Activated T-helper 1 cell treated with anti-CD3 and anti-CD28 coated beads, Interleukin-12 subunit alpha, Interleukin-12 subunit beta, Interleukin-2, Interleukin-4 antibody, amounts not matched to agents 30 ng/mL and 10 ng/mL and 1 ng/mL, durations not matched to agents 14 hours and 24 hours and 36 hours (primary cell): ENCODE measurements at regions of chr9 and their contacts with region 1.

Region 1: GRCh38 chr9:133375724-133376654 is at the starts of genes STKLD1 and SURF4:
- DNase-seq: peak; percentile 96
- H3K4me3 Mint-ChIP-seq: peak within 1 kb of the TSS; percentile 99
- H3K27ac Mint-ChIP-seq: peak within 1 kb of the TSS; percentile 99
- H3K4me1 Mint-ChIP-seq: peaks cover 28% of the 10 kb centered on the region
- H3K27me3 Mint-ChIP-seq: no peaks in the 10 kb centered on the region
- total RNA-seq, gene STKLD1: 0.64 and 1.5 TPM in 2 replicates
- total RNA-seq, gene SURF4: 236 and 242 TPM in 2 replicates

Region 2: DNA sequence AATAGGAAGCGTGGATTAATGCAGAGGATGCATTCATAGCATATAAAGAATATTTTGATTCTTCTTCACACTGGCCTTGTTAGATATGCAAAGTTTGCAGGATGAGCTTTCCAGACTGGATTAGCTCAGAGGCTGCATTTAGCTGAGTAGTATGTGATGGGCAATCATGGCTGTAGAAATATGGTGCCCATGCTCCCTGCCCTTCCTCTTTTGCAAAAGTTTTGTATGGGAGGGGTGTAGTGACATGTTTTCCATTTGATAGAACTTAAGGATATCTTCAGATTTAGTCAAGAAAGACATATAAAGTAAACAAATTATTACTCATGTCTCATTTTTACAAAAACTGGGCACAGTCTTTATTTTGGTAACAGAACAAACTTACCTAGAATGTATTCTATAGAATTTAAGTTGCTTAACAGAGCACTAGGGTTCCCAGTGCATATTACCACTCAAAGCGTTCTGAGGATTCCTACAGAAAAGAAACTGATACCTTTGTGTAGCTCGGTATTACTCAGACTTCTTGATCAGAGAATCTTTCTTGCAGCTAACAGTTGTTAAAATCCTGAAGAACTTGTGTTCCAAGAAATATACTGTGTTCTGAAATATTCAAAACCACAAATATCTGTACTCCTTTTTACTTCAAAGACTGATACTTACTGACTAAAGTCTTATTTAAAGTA is 695.9 kb before region 1 on chr9:
- intact Hi-C with region 1: no loop called
- DNase-seq: no peak
- H3K4me3 Mint-ChIP-seq: no peak overlapping the region
- H3K27ac Mint-ChIP-seq: peak overlapping the region; percentile 90
- H3K4me1 Mint-ChIP-seq: peaks cover 51% of the 10 kb centered on the region
- H3K27me3 Mint-ChIP-seq: no peaks in the 10 kb centered on the region

Region 3: DNA sequence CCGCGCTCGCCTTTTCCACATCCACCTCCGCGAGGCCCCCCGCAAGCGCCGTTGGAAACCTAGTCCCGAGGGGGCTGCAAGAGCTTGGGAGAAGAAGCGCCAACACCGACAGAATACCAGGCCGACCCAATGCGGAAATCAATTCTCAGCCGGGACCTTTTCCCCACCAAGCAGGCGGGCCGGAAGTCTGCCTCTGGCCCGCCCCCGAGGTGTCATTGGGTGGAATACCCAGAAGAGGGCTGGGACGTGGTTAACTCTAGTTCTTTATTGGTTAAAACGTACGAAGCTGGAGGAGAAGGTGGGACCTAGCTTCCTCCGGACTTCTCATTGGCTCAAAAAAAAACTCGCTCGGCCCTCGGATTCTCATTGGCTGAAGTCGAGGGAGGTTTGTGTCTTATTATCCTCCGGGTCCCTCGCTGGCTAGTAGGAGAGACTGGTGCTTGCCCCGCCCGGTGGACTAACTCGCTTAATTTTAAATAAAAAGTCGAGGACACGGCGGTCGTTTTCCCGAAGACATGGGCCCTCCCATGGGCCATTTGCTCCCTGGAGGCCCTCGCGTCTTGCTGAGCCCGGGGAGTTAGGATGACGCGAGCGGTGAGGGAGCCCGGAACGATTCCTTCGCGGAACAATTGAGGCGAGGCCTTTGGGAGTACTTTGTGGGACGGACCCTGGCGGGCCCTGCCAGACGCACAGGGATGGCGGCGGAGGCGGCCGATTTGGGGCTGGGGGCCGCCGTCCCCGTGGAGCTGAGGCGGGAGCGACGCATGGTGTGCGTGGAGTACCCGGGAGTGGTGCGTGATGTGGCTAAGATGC is 345.5 kb before region 1 on chr9 and contains the start of gene GTF3C5:
- intact Hi-C with region 1: loop called (anchors 1 kb)
- DNase-seq: peak; percentile 91
- H3K4me3 Mint-ChIP-seq: peak within 1 kb of the TSS; percentile 96
- H3K27ac Mint-ChIP-seq: peak within 1 kb of the TSS; percentile 97
- H3K4me1 Mint-ChIP-seq: peaks cover 47% of the 10 kb centered on the region
- H3K27me3 Mint-ChIP-seq: no peaks in the 10 kb centered on the region
- total RNA-seq, gene GTF3C5: 87.8 and 89.0 TPM in 2 replicates

Region 4: DNA sequence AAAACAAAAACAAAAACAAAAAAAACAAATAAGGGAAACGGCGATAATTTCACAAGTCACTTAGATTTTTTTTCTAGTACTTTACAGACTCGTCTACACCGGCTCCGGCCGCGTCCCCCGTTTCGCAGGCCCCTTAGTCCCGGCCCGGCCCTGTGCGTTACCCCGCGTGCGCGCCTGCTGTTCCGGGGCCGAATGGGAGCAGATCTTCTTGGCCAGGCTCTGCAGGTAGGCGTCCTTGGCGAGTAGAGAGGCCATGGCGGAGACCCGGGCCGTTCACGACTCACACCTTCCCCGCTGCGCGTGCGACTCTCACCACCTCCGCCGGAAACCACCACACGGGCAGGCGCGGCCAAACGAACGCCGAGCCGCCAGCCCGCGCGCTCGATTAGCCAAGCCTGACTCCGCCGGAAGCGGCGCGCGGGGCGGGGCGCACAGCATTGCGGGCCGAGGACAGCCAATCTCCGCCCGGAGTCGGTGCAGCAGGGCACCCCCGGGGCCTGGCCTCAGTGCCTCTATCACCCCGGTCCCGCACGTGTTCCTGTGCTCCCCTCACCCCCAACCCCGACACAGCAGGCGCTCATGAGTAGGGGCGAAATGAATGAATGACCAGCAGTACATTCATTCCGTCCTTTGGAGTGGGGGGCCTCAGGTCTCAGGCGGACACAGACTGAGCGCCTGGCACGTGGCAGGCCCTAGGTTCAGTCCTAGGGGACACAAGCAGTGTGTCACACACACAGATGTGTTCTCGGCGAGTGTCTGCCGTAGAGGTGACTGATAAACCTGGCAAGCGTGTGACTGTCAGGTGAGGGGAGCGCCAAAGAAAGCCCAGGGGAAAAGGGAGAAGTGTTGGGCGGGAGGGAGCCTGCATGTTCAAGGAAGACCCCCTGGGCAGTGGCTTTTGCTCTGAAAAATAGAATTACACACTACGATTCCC is 39.8 kb before region 1 on chr9 and contains the start of gene SURF6:
- intact Hi-C with region 1: loop called (anchors 1 kb)
- DNase-seq: peak; percentile 94
- H3K4me3 Mint-ChIP-seq: peak within 1 kb of the TSS; percentile 96
- H3K27ac Mint-ChIP-seq: peak within 1 kb of the TSS; percentile 88
- H3K4me1 Mint-ChIP-seq: peaks cover 16% of the 10 kb centered on the region
- H3K27me3 Mint-ChIP-seq: no peaks in the 10 kb centered on the region
- total RNA-seq, gene SURF6: 29.0 and 29.8 TPM in 2 replicates

Region 5: GRCh38 chr9:133356391-133357091 is 19.4 kb before region 1 on chr9 and contains the starts of genes SURF1 and SURF2:
- intact Hi-C with region 1: loop called (anchors 1 kb)
- DNase-seq: peak; percentile 88
- H3K4me3 Mint-ChIP-seq: peak within 1 kb of the TSS; percentile 90
- H3K27ac Mint-ChIP-seq: peak within 1 kb of the TSS; percentile 79
- H3K4me1 Mint-ChIP-seq: peaks cover 37% of the 10 kb centered on the region
- H3K27me3 Mint-ChIP-seq: no peaks in the 10 kb centered on the region
- total RNA-seq, gene SURF1: 36.3 and 37.7 TPM in 2 replicates
- total RNA-seq, gene SURF2: 28.6 and 30.9 TPM in 2 replicates

Region 6: DNA sequence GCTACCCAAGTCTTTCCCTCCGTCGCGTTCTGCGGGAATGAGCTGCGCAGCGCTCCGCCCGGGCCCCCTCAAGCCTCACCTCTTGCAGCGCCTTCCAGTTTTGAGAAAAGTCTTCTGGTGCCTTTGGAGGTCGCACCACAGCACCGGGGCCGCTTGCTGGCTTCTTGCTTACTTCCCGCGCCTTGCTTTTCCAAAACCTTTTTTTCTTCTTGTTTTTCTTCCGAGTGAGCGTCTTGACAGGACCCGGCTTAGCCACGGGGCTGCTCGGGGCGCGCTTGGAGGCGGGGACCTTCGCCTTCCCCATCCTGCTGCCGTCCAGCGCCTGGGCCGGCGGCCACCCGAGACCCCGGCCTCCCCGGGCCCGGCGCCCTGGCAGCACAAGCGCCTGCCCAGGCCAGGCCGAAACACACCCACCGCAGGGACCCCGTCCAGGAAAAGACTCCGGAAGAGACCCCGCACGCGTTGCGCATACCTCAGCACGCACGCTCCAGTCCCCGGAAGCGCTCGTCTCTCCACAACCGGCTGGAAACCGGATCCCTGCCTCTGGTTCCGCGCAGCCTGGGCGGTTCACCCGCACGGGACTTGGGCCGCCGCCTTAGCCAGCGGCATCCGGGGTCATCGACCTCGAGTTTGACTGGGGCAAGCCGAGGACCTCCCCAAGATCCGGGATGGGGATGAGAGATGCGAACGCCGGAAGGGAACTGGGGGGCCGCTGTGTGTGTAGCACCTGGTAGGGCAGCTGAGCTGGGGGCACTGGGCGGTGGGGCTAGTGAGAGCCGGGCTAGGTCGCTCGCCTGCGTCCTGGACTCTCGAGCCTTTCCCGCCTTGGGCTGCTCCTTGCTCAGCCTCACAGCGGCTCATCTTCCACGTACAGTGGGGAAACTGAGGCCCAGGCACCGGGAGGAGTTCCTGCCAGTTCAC is 41.8 kb after region 1 on chr9 and contains the start of gene REXO4:
- intact Hi-C with region 1: loop called (anchors 1 kb)
- DNase-seq: peak; percentile 86
- H3K4me3 Mint-ChIP-seq: peak within 1 kb of the TSS; percentile 93
- H3K27ac Mint-ChIP-seq: peak within 1 kb of the TSS; percentile 86
- H3K4me1 Mint-ChIP-seq: peaks cover 56% of the 10 kb centered on the region
- H3K27me3 Mint-ChIP-seq: no peaks in the 10 kb centered on the region
- total RNA-seq, gene REXO4: 42.5 and 43.8 TPM in 2 replicates

Region 7: DNA sequence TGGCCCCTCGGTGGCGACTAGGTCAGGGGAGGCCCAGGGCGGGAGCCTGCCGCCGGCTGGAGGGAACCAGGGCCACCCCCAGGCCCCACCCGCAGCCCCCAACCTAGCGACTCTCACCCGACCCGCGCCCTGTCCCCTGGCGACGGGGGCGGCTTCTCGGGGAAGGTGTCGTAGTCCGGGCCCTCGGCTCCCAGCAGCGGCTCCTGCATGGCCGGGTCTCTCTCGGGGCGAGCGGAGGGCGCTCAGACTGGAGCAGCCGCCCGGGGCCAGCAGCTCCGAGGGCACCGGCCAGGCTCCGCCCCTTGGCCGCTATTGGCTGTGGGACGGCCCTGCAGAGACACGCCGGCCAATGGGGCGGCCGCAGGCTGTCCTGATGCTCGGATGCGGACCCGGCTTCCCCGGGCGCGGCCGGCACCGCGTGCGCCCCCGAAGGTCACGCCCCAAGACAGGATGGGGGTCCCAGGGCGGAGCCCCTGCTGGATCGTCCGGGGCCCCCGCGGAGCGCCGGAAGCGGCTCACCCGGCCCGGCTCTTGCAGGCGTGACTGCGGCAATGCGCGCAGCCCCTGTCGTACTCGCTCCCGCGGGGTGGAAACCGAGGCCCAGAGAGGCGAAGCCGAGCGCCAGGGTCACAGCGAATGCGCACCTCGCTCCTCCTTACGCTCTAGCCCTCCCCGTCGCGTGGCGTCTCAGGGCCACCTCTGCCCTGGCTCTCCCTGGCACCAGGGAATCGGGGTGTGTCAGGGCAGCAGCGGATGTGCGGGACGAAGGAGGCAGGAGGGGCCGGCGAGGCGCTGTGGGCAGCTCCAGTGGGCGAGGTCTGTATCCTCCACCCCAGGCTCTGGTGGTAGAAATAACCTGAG is 103.1 kb after region 1 on chr9 and contains the start of gene SLC2A6:
- intact Hi-C with region 1: loop called (anchors 2 kb)
- DNase-seq: peak; percentile 82
- H3K4me3 Mint-ChIP-seq: peak within 1 kb of the TSS; percentile 79
- H3K27ac Mint-ChIP-seq: no peak within 1 kb of the TSS
- H3K4me1 Mint-ChIP-seq: peaks cover 6% of the 10 kb centered on the region
- H3K27me3 Mint-ChIP-seq: peaks cover 13% of the 10 kb centered on the region
- total RNA-seq, gene SLC2A6: 4.1 and 4.6 TPM in 2 replicates

Region 8: DNA sequence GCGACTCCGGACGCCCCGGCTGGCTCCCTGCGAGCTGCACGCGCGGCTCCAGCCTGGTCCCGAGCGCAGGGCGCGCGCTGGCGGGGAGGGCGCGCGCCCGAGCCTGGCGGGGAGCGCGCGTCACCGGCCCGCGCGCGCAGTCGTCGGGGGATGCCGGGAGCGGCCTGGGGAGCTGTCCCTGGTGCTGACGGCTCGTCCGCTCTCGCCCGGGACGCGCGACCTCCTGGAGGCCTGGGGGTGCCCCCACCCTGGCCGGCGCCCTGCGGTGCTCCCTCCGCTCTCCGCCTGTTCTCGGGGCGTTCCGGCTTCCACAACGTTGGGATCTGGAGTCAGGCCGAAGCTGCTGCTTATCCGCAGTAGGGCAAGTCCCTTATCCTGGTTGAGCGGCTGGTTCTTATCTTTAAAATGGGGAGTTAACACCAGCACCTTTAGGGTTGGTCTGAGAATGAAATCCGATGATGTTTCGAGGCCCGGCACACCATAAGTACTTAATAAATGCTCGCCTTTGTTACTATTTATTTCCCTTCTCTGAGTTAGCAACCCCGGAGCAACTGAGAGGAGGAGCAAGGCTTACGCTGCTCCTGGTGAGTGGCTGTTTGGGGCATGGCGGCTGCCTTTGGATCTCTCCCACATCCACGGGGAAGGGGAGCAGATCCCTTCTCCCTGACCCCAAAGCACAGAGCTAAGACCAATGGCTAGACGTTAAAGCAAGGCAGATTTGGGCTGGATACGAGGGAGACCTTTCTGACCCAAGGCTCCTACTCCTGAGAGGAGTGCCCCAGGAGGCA is 233.5 kb after region 1 on chr9 and contains the start of gene FAM163B:
- intact Hi-C with region 1: no loop called
- DNase-seq: peak; percentile 30
- H3K4me3 Mint-ChIP-seq: no peak within 1 kb of the TSS
- H3K27ac Mint-ChIP-seq: no peak within 1 kb of the TSS
- H3K4me1 Mint-ChIP-seq: no peaks in the 10 kb centered on the region
- H3K27me3 Mint-ChIP-seq: peaks cover 15% of the 10 kb centered on the region
- total RNA-seq, gene FAM163B: not detected in 2 replicates